MCF 10A (cell line): ENCODE measurements at regions of chr5 and their contacts with region 1.

Region 1: GRCh38 chr5:97231025-97231636 is 48.1 kb upstream of the RIOK2 start:
- DNase-seq: peak; percentile 77
- H3K4me3 Mint-ChIP-seq: no peak overlapping the region
- H3K27ac Mint-ChIP-seq: no peak overlapping the region
- H3K4me1 Mint-ChIP-seq: peaks cover 7% of the 10 kb centered on the region
- H3K27me3 Mint-ChIP-seq: no peaks in the 10 kb centered on the region
- CTCF ChIP-seq: peak; percentile 75

Region 2: DNA sequence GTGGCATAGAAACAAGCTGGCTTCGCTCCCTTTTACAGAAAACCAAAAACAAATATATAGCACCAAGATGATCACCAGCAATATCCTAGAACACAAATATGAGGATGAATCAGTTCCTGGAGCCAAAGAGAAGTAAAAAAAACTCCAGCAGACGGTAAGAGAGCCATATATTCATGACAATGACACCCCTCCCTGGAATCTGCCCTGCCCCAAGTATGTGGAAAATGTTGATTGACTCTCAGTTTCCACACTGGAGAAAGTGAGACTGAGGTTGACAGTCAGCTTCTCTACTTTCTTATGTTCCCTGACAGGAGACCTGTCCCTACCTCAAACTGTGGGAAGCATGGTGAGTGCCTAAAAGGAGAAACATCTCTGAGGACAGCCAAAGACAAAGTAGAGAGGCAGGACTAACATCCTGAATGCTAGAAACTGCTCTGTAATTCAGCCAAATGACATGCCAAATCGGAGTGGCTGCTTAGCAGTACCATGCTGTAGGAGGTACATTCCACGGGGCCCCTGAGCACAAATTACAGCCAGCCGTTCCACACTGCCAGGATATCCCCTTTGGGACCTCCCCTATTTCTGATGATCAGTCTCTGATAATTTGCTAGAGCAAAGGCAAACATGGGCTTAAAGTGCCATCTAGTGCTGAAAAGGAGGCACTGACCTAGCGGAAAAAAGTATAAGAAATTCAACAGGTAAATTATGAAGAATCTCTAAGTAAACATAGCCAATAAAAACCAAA is 1118.3 kb after region 1 on chr5:
- CTCF ChIA-PET with region 1: no interaction called
- POLR2A ChIA-PET with region 1: no interaction called
- intact Hi-C with region 1: loop called (anchors 1 kb)
- DNase-seq: no peak
- H3K4me3 Mint-ChIP-seq: no peak overlapping the region
- H3K27ac Mint-ChIP-seq: no peak overlapping the region
- H3K4me1 Mint-ChIP-seq: no peaks in the 10 kb centered on the region
- H3K27me3 Mint-ChIP-seq: no peaks in the 10 kb centered on the region
- CTCF ChIP-seq: peak; percentile 48

Region 3: DNA sequence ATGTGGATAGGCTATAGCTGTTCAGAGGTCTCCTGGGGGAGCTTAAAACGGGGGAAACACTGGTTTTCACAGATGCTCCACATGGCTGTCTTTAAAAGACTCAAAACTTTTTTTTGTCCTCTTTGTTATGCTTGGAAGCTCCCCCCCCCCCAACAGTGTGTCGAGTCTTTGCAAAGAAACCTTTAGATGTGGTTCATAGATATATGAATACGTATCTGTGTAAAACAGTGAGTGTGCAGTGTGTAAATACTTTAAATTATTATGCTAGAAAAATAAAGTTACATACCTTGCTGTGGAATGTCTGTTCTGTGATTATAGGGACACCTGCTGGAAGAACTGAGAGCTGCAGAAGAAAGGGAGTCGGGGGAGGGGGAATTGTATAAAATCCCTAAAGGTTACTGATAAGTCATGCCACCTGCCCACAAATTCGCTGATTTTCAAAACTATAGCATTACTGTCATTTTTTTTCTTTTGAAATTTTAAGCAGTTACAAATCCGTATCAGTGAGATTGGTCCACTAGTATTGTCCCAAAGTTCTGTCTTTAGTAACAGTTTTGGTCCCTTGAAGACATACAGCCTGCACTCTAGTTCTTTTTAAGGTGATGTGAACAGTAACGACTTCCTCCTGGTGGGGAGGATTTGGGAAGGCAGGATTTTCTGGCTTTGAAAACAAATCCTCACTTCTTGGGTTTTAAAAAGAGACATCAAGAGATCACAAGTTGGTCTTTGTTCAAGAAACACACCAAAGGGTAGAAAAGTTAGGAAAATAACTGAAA is 1565.3 kb after region 1 on chr5:
- CTCF ChIA-PET with region 1: interaction called, 14 read pairs
- POLR2A ChIA-PET with region 1: no interaction called
- intact Hi-C with region 1: no loop called
- DNase-seq: peak; percentile 74
- H3K4me3 Mint-ChIP-seq: no peak overlapping the region
- H3K27ac Mint-ChIP-seq: no peak overlapping the region
- H3K4me1 Mint-ChIP-seq: no peaks in the 10 kb centered on the region
- H3K27me3 Mint-ChIP-seq: no peaks in the 10 kb centered on the region
- CTCF ChIP-seq: peak; percentile 73

Region 4: DNA sequence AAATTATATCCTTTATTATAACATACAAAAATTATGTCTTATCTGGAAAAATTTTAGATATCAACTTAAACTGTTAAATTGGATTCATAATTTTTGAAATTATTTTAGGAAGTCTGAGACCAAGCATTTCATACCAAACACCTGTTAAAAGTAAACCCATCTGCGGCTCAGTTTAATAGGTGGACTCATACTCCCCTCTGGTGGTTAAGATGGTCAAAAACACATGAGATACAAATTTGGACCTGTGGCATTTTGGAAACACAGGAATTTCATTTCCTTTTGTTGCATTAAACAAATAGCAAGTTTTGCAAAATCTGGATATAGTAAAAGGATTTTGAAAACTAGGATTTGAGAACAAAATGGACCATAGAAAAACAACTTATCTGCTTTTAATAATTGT is 1596.0 kb after region 1 on chr5:
- CTCF ChIA-PET with region 1: no interaction called
- POLR2A ChIA-PET with region 1: no interaction called
- intact Hi-C with region 1: loop called (anchors 2 kb)
- DNase-seq: peak; percentile 60
- H3K4me3 Mint-ChIP-seq: no peak overlapping the region
- H3K27ac Mint-ChIP-seq: no peak overlapping the region
- H3K4me1 Mint-ChIP-seq: no peaks in the 10 kb centered on the region
- H3K27me3 Mint-ChIP-seq: no peaks in the 10 kb centered on the region
- CTCF ChIP-seq: peak; percentile 57